ENCODE measurements at regions of chr15 and their contacts with region 1.

Region 1: DNA sequence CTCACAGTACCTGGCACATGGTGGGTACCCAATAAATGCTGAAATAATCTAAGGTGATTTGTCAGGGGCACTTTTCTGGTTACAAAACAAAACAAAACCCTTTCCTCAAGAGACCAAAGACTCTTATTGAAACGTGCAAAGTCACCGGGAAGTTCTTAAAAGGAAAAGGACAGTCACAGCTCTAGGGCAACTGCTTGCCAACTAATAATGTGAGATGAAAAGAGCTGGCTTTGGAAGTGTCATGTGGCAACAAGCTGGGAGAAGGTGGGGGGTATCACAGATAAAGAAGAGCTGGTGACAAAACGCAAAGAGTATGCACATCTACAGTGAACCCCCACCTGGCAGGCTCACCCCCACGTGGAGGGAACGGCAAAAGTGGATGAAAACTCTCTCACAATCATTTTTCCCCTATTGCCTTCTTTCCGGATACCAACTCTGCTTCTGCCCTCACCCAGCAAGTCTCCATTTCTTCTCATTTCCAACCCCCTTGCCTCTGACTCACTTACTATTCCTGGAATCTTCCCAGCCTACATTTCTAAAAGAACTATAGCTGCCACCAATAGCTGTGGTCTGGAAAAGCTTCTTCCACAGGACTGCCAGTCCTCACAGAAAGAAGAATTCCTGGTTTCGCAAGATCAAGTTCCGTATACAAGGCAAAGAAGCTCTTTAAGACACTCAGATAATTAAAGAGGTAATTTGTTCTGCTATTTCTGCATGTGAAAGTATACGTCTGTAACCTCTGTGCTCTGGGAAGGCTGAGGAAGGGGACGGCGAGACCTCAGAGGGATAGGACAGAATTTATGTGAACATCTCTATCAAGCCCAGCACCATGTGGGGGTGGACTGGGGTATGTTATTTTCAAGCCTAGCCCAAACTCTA is 21.8 kb upstream of the ANPEP start:
- DNase-seq: peak; percentile 94
- H3K4me3 Mint-ChIP-seq: peak overlapping the region; percentile 63
- H3K27ac Mint-ChIP-seq: peak overlapping the region; percentile 98
- H3K4me1 Mint-ChIP-seq: peaks cover 35% of the 10 kb centered on the region
- H3K27me3 Mint-ChIP-seq: no peaks in the 10 kb centered on the region
- CTCF ChIP-seq: no peak

Region 2: DNA sequence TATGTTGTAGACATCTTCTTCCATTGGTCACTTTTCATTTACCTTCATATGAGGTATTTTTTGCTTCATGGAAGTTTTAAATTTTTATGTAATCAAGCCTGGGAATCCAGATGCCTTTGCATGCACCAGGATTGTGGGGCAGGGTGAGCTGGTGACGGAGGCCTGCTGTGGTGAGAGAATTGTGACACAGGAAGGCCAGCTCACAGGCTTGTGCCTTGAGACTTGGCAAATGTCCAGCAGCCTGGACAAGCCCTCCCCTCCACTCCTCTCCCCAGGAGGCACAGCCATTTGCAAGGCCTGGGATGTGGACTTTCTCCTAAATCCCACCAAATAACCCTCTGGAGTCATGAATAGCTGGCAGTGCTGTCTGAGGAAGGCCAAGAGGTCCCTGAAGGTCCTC is 407.5 kb before region 1 on chr15:
- CTCF ChIA-PET with region 1: no interaction called
- POLR2A ChIA-PET with region 1: no interaction called
- intact Hi-C with region 1: no loop called
- DNase-seq: peak; percentile 36
- H3K4me3 Mint-ChIP-seq: no peak overlapping the region
- H3K27ac Mint-ChIP-seq: no peak overlapping the region
- H3K4me1 Mint-ChIP-seq: peaks cover 4% of the 10 kb centered on the region
- H3K27me3 Mint-ChIP-seq: peaks cover 9% of the 10 kb centered on the region
- CTCF ChIP-seq: no peak

Region 3: DNA sequence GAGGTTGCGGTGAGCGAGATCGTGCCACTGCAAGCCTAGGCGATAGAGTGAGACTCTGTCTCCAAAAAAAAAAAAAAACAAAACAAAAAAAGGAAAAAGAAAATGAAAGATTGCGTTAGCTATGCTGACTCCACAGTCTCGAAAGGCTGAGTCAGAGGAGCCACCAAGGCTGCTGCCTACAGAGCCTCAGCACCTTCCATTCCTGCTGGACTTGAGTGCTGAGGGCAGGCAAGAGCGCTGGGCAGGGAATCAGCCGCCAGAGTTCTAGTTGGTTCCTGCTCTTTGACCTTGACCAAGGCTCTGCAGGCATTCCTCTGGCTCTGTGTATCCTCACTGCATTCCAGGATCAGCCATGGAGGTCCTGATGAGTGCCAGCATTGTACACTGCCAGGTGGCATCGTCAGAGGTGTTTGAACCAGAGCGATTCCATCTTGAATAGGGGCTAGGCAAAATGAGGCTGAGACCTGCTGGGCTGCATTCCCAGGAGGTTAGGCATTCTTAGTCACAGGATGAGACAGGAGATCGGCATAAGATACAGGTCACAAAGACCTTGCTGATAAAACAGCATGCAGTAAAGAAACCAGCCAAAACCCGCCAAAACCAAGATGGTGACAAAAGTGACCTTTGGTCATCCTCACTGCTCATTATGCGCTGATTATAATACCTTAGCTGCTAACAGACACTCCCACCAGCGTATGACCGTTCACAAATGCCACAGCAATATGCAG is 54.4 kb before region 1 on chr15:
- CTCF ChIA-PET with region 1: no interaction called
- POLR2A ChIA-PET with region 1: interaction called, 14 read pairs
- intact Hi-C with region 1: no loop called
- DNase-seq: peak; percentile 84
- H3K4me3 Mint-ChIP-seq: peak overlapping the region; percentile 48
- H3K27ac Mint-ChIP-seq: peak overlapping the region; percentile 55
- H3K4me1 Mint-ChIP-seq: peaks cover 24% of the 10 kb centered on the region
- H3K27me3 Mint-ChIP-seq: no peaks in the 10 kb centered on the region
- CTCF ChIP-seq: no peak

Region 4: DNA sequence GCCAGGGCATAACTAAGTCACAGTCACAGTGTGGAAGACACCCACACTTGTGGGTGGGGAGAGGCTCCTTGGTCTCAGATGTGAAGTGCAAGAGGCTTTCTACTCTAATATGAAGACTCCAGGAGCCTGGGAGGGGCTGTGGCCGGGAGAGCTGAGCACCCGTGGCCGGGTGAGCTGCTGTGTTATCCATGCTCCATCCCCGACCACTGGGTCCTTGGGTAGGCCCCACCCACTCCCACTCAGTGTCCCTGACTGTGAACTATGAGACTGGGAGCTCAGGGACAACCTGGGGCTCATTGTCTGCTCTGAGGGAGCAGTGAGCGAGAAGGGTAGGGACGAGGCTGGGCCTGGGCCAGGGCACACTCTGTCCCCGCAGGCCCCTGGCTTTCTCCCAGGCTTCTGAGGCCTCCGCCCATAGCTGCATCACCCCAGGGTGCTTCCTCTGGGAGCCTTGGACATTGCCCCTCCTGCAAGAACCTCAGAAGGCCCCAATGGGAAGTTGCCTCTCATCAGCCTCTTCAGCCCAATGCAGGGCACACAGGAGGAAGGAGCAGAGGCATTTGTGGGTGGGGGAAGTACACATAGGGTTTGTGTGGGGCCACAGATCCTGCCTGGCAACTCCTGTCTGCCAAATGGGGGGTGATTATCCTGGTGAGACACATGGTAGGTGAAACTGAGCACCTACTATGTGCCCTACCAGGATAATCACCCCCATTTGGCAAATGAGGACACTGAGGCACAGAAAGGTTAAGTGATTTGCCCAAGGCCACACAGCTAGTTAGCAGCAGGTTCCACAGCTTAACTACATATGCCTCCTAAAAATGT is 24.3 kb before region 1 on chr15:
- CTCF ChIA-PET with region 1: interaction called, 5 read pairs
- POLR2A ChIA-PET with region 1: interaction called, 32 read pairs
- intact Hi-C with region 1: no loop called
- DNase-seq: peak; percentile 97
- H3K4me3 Mint-ChIP-seq: peak overlapping the region; percentile 89
- H3K27ac Mint-ChIP-seq: peak overlapping the region; percentile 88
- H3K4me1 Mint-ChIP-seq: peaks cover 33% of the 10 kb centered on the region
- H3K27me3 Mint-ChIP-seq: no peaks in the 10 kb centered on the region
- CTCF ChIP-seq: no peak

Region 5: GRCh38 chr15:89820666-89821611 is 15.6 kb before region 1 on chr15:
- CTCF ChIA-PET with region 1: interaction called, 4 read pairs
- POLR2A ChIA-PET with region 1: interaction called, 32 read pairs
- intact Hi-C with region 1: no loop called
- DNase-seq: peak; percentile 88
- H3K4me3 Mint-ChIP-seq: peak overlapping the region; percentile 33
- H3K27ac Mint-ChIP-seq: peak overlapping the region; percentile 81
- H3K4me1 Mint-ChIP-seq: peaks cover 43% of the 10 kb centered on the region
- H3K27me3 Mint-ChIP-seq: no peaks in the 10 kb centered on the region
- CTCF ChIP-seq: no peak

Measured in MCF 10A (cell line).